ENCODE measurements at regions of chr2 and their contacts with region 1.

Region 1: GRCh38 chr2:152506843-152507242 is 171.9 kb downstream of the FMNL2 start:
- DNase-seq: no peak

Region 2: GRCh38 chr2:152189622-152190495 is 317.0 kb before region 1 on chr2:
- intact Hi-C with region 1: no loop called
- DNase-seq: no peak

Region 3: GRCh38 chr2:152534460-152535135 is 27.8 kb after region 1 on chr2:
- intact Hi-C with region 1: loop called in 1 of 2 experiments (anchors 2 kb)
- DNase-seq: no peak

Measured in posterior vena cava (tissue), 2 donors.